HEK293T (cell line): ENCODE measurements at regions of chr10 and their contacts with region 1.

Region 1: GRCh38 chr10:15168781-15169554 is 475 bp upstream of the NMT2 start:
- DNase-seq: peak; percentile 97

Region 2: GRCh38 chr10:15182540-15183207 is 13.7 kb after region 1 on chr10:
- CTCF ChIA-PET with region 1: interaction called, 3 read pairs
- POLR2A ChIA-PET with region 1: interaction called, 14 read pairs
- DNase-seq: no peak

Region 3: GRCh38 chr10:15361131-15361530 is 192.2 kb after region 1 on chr10:
- CTCF ChIA-PET with region 1: no interaction called
- POLR2A ChIA-PET with region 1: no interaction called
- DNase-seq: no peak